MCF 10A (cell line): ENCODE measurements at regions of chr1 and their contacts with region 1.

Region 1: DNA sequence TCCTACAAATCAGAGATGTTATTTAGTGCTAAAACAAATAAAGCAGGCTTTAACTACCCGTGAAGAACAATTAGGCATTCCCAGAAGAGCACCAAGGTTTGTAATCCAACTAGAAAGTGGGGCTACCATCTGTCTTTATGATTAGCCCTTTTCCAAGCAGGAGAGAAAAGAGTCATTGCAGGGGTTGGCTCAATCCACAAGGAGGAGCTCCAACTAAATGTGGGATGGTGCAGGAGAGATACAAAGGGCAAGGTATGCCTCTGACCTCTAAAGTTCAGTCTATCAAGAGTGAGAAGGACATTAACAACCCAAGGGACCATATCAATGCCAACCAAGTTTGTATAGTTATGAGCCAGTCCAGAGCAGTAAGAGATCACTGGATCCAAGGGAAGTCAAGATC is 382.7 kb upstream of the DUSP10 start:
- DNase-seq: peak; percentile 64
- H3K4me3 Mint-ChIP-seq: no peak overlapping the region
- H3K27ac Mint-ChIP-seq: no peak overlapping the region
- H3K4me1 Mint-ChIP-seq: no peaks in the 10 kb centered on the region
- H3K27me3 Mint-ChIP-seq: no peaks in the 10 kb centered on the region
- CTCF ChIP-seq: peak; percentile 58

Region 2: GRCh38 chr1:221979461-221980032 is 145.1 kb before region 1 on chr1:
- CTCF ChIA-PET with region 1: no interaction called
- POLR2A ChIA-PET with region 1: no interaction called
- intact Hi-C with region 1: no loop called
- DNase-seq: peak; percentile 54
- H3K4me3 Mint-ChIP-seq: no peak overlapping the region
- H3K27ac Mint-ChIP-seq: no peak overlapping the region
- H3K4me1 Mint-ChIP-seq: peaks cover 21% of the 10 kb centered on the region
- H3K27me3 Mint-ChIP-seq: no peaks in the 10 kb centered on the region
- CTCF ChIP-seq: peak; percentile 72

Region 3: DNA sequence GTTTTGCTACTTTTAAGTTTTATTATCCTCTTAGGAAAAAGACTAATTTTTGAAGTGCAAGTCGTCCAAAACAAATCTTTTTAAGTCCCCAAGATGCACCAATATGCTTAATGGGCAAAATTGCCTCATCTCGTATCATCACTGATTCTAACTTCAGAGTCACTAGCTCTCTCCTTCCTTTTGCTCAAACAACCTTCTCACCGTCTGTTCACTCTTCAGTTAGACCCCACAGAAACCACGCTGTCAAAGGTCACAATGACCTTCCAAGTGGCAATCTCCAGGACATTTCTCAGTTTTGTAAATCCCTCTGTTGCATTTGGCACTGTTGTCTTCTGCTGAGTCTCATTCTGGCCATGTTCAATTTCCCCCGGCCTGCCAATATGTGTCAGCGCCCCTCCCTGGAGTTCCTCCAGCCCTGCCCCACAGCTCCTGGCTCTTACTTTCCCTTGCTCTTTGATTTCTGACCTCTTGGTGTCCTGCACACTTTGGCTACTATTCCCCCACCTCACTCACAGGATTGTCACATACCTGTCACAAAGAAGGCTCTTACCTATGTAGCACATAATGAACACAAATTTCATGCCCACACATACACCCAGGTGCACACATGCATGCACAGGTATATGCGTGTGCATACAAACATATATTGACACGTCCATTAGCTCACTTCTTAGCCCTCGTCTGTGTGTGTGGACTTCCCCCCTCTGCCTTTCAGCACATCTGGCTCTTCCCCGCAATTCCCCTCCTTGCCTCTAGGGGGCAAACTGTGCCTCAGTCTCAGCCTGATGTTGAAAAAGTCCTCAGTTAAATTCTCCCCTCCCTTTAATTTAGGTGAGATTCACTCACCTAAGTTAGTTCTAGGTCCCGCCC is 28.8 kb before region 1 on chr1:
- CTCF ChIA-PET with region 1: interaction called, 15 read pairs
- POLR2A ChIA-PET with region 1: interaction called, 3 read pairs
- intact Hi-C with region 1: no loop called
- DNase-seq: peak; percentile 72
- H3K4me3 Mint-ChIP-seq: no peak overlapping the region
- H3K27ac Mint-ChIP-seq: no peak overlapping the region
- H3K4me1 Mint-ChIP-seq: no peaks in the 10 kb centered on the region
- H3K27me3 Mint-ChIP-seq: no peaks in the 10 kb centered on the region
- CTCF ChIP-seq: peak; percentile 97

Region 4: DNA sequence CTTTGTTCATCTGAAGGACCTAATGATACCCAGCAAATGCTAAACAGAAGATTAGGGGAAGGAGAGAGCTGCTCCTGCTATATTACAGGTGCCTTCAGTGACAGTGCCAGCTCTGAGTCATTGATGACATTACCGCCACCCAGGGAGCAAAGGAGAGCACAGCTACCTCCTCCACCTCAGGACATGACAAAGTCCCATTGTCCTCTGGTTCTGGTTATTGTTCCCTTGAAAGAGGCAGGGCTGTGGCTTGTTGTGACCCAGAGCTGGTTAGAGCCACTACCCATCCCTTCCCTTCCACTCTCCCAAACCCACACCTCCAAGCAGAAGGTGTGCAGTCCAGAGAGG is 19.2 kb before region 1 on chr1:
- CTCF ChIA-PET with region 1: interaction called, 16 read pairs
- POLR2A ChIA-PET with region 1: no interaction called
- intact Hi-C with region 1: no loop called
- DNase-seq: no peak
- H3K4me3 Mint-ChIP-seq: no peak overlapping the region
- H3K27ac Mint-ChIP-seq: no peak overlapping the region
- H3K4me1 Mint-ChIP-seq: no peaks in the 10 kb centered on the region
- H3K27me3 Mint-ChIP-seq: no peaks in the 10 kb centered on the region
- CTCF ChIP-seq: no peak